IMR-90 (cell line): ENCODE measurements at regions of chr12 and their contacts with region 1.

Region 1: GRCh38 chr12:116277393-116278278 is at the start of gene MED13L:
- DNase-seq: peak; percentile 78
- ATAC-seq: peak; percentile 95
- H3K4me3 ChIP-seq: peak within 1 kb of the TSS; percentile 58
- H3K27ac ChIP-seq: peak within 1 kb of the TSS; percentile 91
- H3K4me1 ChIP-seq: 0 out of 2 replicates have a peak, but pooled peaks cover 1% of the 10 kb centered on the region
- H3K27me3 ChIP-seq: no peaks in the 10 kb centered on the region
- CTCF ChIP-seq: peak; percentile 49
- POLR2A ChIP-seq: peak; percentile 57; the same call in 1 of the 2 replicates
- RAD21 ChIP-seq: peak; percentile 66
- total RNA-seq, gene MED13L: 49.1 and 93.3 TPM in 2 replicates

Region 2: GRCh38 chr12:116015525-116015924 is 262.1 kb before region 1 on chr12:
- CTCF ChIA-PET with region 1: interaction called, 3 read pairs
- POLR2A ChIA-PET with region 1: no interaction called
- dilution Hi-C with region 1: no loop called
- in situ Hi-C with region 1: no loop called
- intact Hi-C with region 1: loop called (anchors 1 kb)
- DNase-seq: peak; percentile 68
- ATAC-seq: peak; percentile 89
- H3K4me3 ChIP-seq: no peak overlapping the region
- H3K27ac ChIP-seq: no peak overlapping the region
- H3K4me1 ChIP-seq: 0 out of 2 replicates have a peak, but pooled peaks cover 1% of the 10 kb centered on the region
- H3K27me3 ChIP-seq: no peaks in the 10 kb centered on the region
- CTCF ChIP-seq: peak; percentile 70
- POLR2A ChIP-seq: no peak
- RAD21 ChIP-seq: peak; percentile 79

Region 3: GRCh38 chr12:116382686-116383531 is 105.3 kb after region 1 on chr12:
- CTCF ChIA-PET with region 1: no interaction called
- POLR2A ChIA-PET with region 1: no interaction called
- dilution Hi-C with region 1: no loop called
- in situ Hi-C with region 1: no loop called
- intact Hi-C with region 1: loop called (anchors 2 kb)
- DNase-seq: peak; percentile 99
- ATAC-seq: peak; percentile 66
- H3K4me3 ChIP-seq: no peak overlapping the region
- H3K27ac ChIP-seq: peak overlapping the region; percentile 95
- H3K4me1 ChIP-seq: peaks cover 23% of the 10 kb centered on the region
- H3K27me3 ChIP-seq: no peaks in the 10 kb centered on the region
- CTCF ChIP-seq: peak; percentile 13; the same call in 1 of the 2 replicates
- POLR2A ChIP-seq: no peak
- RAD21 ChIP-seq: peak; percentile 42

Region 4: GRCh38 chr12:116525418-116526001 is 247.9 kb after region 1 on chr12:
- CTCF ChIA-PET with region 1: no interaction called
- POLR2A ChIA-PET with region 1: no interaction called
- dilution Hi-C with region 1: no loop called
- in situ Hi-C with region 1: no loop called
- intact Hi-C with region 1: loop called (anchors 2 kb)
- DNase-seq: peak; percentile 92
- ATAC-seq: peak; percentile 92
- H3K4me3 ChIP-seq: peak overlapping the region; percentile 16; the same call in 1 of the 2 replicates
- H3K27ac ChIP-seq: peak overlapping the region; percentile 90
- H3K4me1 ChIP-seq: peaks cover 12% of the 10 kb centered on the region
- H3K27me3 ChIP-seq: no peaks in the 10 kb centered on the region
- CTCF ChIP-seq: no peak
- POLR2A ChIP-seq: peak; percentile 46; the same call in 1 of the 2 replicates
- RAD21 ChIP-seq: peak; percentile 26; the same call in 1 of the 2 replicates

Region 5: GRCh38 chr12:116697305-116697704 is 419.7 kb after region 1 on chr12:
- CTCF ChIA-PET with region 1: no interaction called
- POLR2A ChIA-PET with region 1: no interaction called
- dilution Hi-C with region 1: no loop called
- in situ Hi-C with region 1: no loop called
- intact Hi-C with region 1: loop called (anchors 5 kb)
- DNase-seq: no peak
- ATAC-seq: peak; percentile 63; the same call in 1 of the 2 replicates
- H3K4me3 ChIP-seq: no peak overlapping the region
- H3K27ac ChIP-seq: no peak overlapping the region
- H3K4me1 ChIP-seq: no peaks in the 10 kb centered on the region; the same call in 1 of the 2 replicates
- H3K27me3 ChIP-seq: peaks cover 45% of the 10 kb centered on the region
- CTCF ChIP-seq: peak; percentile 29; the same call in 1 of the 2 replicates
- POLR2A ChIP-seq: no peak
- RAD21 ChIP-seq: peak; percentile 42